Posterior vena cava (tissue), 2 donors: ENCODE measurements at regions of chrX and their contacts with region 1.

Region 1: GRCh38 chrX:41452966-41453365 is 5.8 kb downstream of the NYX start:
- DNase-seq: no peak

Region 2: GRCh38 chrX:41481264-41482109 is 28.5 kb after region 1 on chrX:
- intact Hi-C with region 1: loop called in 1 of 2 experiments (anchors 1 kb)
- DNase-seq: no peak